ENCODE measurements at regions of chr9 and their contacts with region 1.

Region 1: DNA sequence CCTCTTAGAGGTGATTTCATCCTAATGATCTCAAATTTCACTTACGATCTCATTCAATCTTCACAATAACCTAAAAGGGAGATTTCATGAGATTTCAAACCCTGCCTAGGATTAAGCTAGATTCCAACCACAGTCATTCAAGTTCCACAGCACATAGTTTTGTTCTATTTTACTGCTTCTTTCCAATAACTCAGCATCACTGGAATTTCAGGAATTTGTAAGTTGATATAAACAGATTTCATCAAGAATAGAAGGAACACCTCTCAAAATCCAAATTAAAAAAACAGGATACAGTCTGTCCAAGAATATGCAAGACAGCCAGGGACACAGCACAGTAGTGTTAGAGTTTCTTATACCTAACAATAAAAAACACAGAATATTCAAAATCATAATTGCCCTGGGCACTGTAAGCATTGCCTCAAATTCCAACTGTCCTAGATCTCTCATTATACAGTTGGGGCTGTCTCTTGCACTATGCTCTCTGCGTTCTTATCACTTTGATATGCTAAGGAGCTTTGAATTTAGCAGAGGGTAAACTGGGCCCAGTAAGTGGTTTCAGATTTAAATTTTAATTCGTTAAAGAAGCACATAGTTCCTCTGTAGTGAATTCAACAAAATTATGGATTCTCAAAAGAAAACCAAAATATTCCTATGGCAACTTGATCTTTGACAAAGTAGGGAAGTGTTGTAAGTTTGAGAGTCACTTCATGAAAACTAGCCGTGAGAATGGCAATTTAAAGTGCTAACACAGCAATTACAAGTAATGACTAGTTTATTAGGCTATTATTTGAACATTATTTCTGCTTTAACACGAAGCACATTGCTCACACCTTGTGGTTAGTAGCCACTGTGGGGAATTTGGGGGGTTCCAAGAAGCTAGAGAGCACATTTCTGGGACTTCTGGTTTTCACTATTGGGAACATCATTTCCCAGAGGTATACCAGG is 478.6 kb upstream of the C9orf72 start:
- DNase-seq: no peak
- H3K4me3 ChIP-seq: no peak overlapping the region
- H3K27ac ChIP-seq: no peak overlapping the region
- H3K4me1 ChIP-seq: no peaks in the 10 kb centered on the region
- H3K27me3 ChIP-seq: no peaks in the 10 kb centered on the region
- CTCF ChIP-seq: no peak
- POLR2A ChIP-seq: no peak

Region 2: GRCh38 chr9:27131731-27132130 is 920.1 kb before region 1 on chr9:
- intact Hi-C with region 1: loop called (anchors 5 kb)
- DNase-seq: no peak
- H3K4me3 ChIP-seq: no peak overlapping the region
- H3K27ac ChIP-seq: no peak overlapping the region
- H3K4me1 ChIP-seq: no peaks in the 10 kb centered on the region
- H3K27me3 ChIP-seq: no peaks in the 10 kb centered on the region
- CTCF ChIP-seq: no peak
- POLR2A ChIP-seq: no peak

Measured in breast epithelium (tissue), 4 donors.